Posterior vena cava (tissue), 2 donors: ENCODE measurements at regions of chr10 and their contacts with region 1.

Region 1: DNA sequence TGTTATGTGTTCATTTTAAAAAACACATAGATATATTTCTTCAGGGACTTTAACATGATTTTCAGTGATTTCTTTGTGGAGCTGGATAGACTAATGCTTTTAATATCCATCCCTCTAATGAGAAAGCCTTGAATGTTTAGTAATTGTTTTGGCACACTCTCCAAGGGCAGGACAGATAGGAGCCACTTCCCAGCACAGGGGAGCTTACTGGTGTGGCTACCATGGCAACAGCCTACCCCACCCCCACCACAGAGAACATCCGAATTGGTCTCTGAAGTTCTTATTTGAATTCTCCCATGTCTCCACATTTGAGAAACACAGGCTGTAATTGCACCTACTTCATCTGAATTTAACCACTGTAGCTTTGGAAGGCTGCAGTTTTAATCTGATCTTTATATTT is 87.7 kb downstream of the PRKG1 start:
- DNase-seq: no peak

Region 2: DNA sequence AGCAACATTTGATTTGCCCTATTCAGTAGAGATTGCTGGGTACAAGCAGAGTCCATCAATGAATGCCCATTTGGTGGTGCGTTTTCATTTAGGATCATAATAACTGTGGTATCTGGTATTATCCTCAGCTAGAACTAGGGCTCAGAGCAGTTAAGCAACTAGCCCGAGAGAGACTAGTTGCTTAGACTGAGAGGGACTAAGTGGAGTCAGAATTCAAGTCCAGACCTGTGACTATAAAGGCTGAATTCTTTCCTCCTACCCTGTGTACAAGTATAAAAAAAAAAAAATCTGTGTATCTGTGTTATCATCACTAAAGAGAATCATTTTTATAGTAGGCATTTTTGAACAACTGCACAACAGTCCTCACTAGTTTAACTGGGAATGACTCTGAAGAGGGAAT is 1106.8 kb after region 1 on chr10:
- intact Hi-C with region 1: loop called in 1 of 2 experiments (anchors 5 kb)
- DNase-seq: no peak